ENCODE measurements at regions of chr2 and their contacts with region 1.

Region 1: GRCh38 chr2:173553593-173553992 is 198.9 kb downstream of the CDCA7 start:
- DNase-seq: no peak
- H3K4me3 ChIP-seq: no peak overlapping the region
- H3K27ac ChIP-seq: no peak overlapping the region
- H3K4me1 ChIP-seq: peaks cover 0 to 5% (median 0%) of the 10 kb centered on the region in 4 donors
- H3K27me3 ChIP-seq: peaks cover 0 to 12% (median 0%) of the 10 kb centered on the region in 3 donors
- CTCF ChIP-seq: no peak
- EP300 ChIP-seq: no peak
- POLR2A ChIP-seq: no peak

Region 2: DNA sequence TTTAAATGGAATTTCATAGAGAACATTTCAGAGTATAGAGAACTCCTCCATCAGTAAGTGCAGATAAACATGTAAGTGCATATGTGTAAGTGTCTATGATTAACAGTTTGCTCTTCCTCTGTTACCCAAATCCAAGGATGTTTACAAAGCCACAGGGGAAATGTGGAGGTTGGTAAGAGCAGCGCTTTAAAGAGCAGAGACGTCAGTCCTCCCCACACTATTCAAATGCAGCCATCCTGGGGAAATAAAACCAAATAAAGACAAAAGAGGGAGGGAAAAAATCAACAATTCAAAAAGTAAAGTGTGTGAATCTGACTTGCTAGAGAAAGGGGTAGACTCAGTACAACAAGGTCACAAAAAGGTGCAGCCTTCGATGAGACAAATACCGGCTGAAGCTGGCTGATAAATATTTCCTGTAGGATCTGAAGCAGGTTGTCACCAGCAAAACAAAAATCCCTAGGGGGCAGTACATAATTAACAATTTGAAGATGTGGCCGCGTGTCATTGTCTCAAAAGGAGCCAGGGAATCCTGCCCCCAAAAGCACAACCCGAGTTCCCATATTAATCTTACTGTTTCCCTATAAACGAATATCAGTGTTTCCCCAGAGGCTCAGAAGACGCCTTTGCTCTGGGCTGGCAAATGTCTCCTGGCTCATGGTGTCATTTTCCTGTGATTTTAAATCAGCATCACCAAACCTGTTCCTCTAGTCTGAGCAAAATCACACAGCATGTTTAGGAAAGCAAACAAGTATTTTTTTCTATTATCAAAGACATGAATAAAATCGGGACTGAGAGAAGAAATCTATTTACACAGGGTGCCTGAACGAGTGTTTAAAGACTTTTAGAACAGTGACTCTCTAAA is 17.7 kb after region 1 on chr2:
- intact Hi-C with region 1: loop called (anchors 2 kb)
- DNase-seq: no peak
- H3K4me3 ChIP-seq: no peak overlapping the region
- H3K27ac ChIP-seq: no peak overlapping the region
- H3K4me1 ChIP-seq: peaks cover 0 to 3% (median 0%) of the 10 kb centered on the region in 4 donors
- H3K27me3 ChIP-seq: no peaks in the 10 kb centered on the region
- CTCF ChIP-seq: peak in 1 of 4 experiments; percentile 29
- EP300 ChIP-seq: no peak
- POLR2A ChIP-seq: no peak

Measured in sigmoid colon (tissue), 7 donors.